AG04450 (cell line): ENCODE measurements at regions of chr17 and their contacts with region 1.

Region 1: GRCh38 chr17:2416010-2416734 is 15.3 kb upstream of the MNT start:
- DNase-seq: no peak
- H3K4me3 ChIP-seq: no peak overlapping the region
- H3K27ac ChIP-seq: peak overlapping the region; percentile 21
- H3K27me3 ChIP-seq: no peaks in the 10 kb centered on the region
- CTCF ChIP-seq: peak; percentile 91

Region 2: DNA sequence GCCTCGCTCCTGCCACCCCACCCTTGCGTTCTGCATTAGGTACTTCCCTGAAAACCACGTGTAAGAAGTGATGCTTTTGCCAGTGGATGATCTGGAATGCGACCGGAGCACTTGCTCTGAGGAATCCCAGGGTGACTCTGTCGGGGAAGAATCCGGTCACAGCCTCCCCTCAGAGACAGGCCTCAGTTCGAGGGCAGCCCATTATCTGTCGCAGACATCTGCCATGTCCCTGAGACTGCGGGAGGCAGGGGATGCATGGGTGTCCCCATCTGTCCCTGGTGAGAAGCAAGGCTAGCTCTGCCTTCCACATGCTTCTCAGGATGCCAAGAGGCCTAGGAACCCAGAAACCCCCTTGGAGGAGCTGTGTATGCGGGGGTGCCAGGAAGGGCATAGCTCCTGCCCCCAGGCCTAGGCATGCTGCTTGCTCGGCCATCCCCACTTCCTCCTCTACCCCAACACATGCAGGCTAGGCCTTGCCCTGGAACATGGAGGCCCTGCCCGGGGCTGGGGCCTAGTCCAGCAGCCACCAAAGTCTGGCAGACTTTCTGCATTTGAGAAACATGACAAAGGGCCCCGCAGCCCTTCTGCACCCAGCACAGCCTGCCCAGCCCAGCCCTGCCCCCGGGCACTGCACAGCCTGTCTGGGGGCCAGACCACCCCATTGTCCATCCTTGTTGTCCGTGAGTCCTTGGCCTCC is 35.8 kb before region 1 on chr17:
- CTCF ChIA-PET with region 1: interaction called, 320 read pairs
- POLR2A ChIA-PET with region 1: interaction called, 18 read pairs
- DNase-seq: no peak
- H3K4me3 ChIP-seq: no peak overlapping the region
- H3K27ac ChIP-seq: no peak overlapping the region
- H3K27me3 ChIP-seq: no peaks in the 10 kb centered on the region
- CTCF ChIP-seq: no peak

Region 3: DNA sequence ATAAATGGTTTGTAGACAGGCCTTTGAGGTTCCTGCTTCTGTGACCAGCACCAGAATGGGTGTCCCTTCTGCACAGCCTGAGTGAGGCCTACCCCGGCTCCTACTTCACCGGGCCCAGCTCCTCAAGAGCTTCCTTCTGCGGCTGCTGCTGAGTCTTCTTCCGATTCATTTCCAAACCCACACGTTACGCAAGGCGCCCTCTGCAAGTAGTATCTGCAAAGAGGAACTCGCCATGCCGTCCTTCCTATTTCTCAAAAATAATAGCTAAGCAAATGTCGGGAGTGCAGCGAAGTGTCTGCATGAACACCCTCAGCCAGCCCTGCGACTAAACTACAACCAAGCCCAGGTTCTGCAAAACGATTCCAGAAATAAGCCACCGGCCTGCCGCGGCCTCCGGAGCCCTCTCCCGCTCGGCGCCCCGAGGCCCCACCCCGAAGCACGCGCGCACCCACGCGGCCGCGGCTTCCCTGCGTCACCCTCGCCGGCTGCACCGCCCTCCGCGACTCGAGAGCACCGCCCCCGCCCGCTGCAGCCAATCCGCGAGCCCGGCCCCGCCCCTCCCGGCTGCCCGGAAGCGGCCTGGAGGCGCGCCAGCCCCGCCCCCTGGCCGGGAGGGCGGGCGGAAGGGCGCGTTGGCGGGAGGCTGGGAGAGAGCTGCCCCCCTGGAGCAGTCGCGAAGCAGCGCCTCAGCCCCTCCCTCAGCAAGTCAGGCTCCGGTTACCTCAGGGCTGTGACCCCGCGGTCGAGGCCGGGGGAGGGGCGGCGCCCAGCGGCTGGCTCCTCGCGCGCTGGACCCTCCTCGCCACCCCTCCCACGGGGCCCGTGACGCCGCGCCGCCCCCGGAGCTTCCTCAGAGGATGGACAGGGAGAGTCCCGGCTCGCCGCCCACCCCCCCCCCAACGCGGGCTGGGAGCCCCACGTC is 23.7 kb before region 1 on chr17:
- CTCF ChIA-PET with region 1: interaction called, 31 read pairs
- POLR2A ChIA-PET with region 1: interaction called, 8 read pairs
- DNase-seq: peak; percentile 90
- H3K4me3 ChIP-seq: peak overlapping the region; percentile 64
- H3K27ac ChIP-seq: peak overlapping the region; percentile 96
- H3K27me3 ChIP-seq: no peaks in the 10 kb centered on the region
- CTCF ChIP-seq: no peak

Region 4: DNA sequence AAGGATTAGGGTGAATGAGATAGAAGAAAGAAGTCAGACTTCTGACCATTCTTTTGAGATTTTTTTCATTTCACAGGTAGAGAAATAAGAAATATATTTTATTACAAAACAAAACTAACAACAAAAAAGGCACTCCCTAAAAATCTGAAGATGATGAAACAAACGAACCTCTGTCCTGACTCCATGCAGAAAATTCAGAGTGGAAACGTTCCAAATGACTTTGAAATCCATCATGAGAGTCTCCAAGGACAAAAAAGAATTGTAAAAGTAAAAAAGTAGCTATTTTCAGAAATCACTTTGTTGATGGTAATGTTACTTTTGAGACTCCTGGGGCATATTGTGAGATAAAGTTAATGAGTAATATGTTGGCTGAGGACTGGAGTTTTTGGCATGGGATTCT is 11.0 kb after region 1 on chr17:
- CTCF ChIA-PET with region 1: interaction called, 10 read pairs
- POLR2A ChIA-PET with region 1: interaction called, 4 read pairs
- DNase-seq: no peak
- H3K4me3 ChIP-seq: no peak overlapping the region
- H3K27ac ChIP-seq: no peak overlapping the region
- H3K27me3 ChIP-seq: no peaks in the 10 kb centered on the region
- CTCF ChIP-seq: no peak

Region 5: GRCh38 chr17:3723556-3724369 is 1307.6 kb after region 1 on chr17 and contains the start of gene HASPIN:
- CTCF ChIA-PET with region 1: interaction called, 10 read pairs
- POLR2A ChIA-PET with region 1: no interaction called
- DNase-seq: peak; percentile 62
- H3K4me3 ChIP-seq: peak within 1 kb of the TSS; percentile 94
- H3K27ac ChIP-seq: peak within 1 kb of the TSS; percentile 57
- H3K27me3 ChIP-seq: no peaks in the 10 kb centered on the region
- CTCF ChIP-seq: peak; percentile 34
- polyA plus RNA-seq, gene HASPIN: 1.3 and 1.6 TPM in 2 replicates